ENCODE measurements at regions of chr7 and their contacts with region 1.

Region 1: GRCh38 chr7:518630-519483 is 789 bp downstream of the PDGFA start:
- DNase-seq: peak; percentile 82 to 88
- ATAC-seq: peak; percentile 62 to 71 (median 68)
- H3K4me3 ChIP-seq: peak overlapping the region; percentile 94
- H3K27ac ChIP-seq: peak overlapping the region; percentile 92
- H3K4me1 ChIP-seq: peaks cover 38% of the 10 kb centered on the region
- H3K27me3 ChIP-seq: peaks cover 0 to 8% (median 2%) of the 10 kb centered on the region in 3 donors
- CTCF ChIP-seq: no peak

Region 2: GRCh38 chr7:332646-333392 is 186.0 kb before region 1 on chr7:
- intact Hi-C with region 1: loop called (anchors 2 to 5 kb)
- DNase-seq: peak; percentile 82 to 89
- ATAC-seq: peak; percentile 92 to 99 (median 96)
- H3K4me3 ChIP-seq: peak overlapping the region; percentile 59
- H3K27ac ChIP-seq: no peak overlapping the region
- H3K4me1 ChIP-seq: peaks cover 13% of the 10 kb centered on the region
- H3K27me3 ChIP-seq: peaks cover 0 to 7% (median 3%) of the 10 kb centered on the region in 3 donors
- CTCF ChIP-seq: peak; percentile 91

Region 3: GRCh38 chr7:418647-419280 is 100.1 kb before region 1 on chr7:
- intact Hi-C with region 1: no loop called
- DNase-seq: peak in 1 of 2 donors; percentile 52
- ATAC-seq: no peak
- H3K4me3 ChIP-seq: no peak overlapping the region
- H3K27ac ChIP-seq: no peak overlapping the region
- H3K4me1 ChIP-seq: no peaks in the 10 kb centered on the region
- H3K27me3 ChIP-seq: peaks cover 0 to 12% (median 4%) of the 10 kb centered on the region in 3 donors
- CTCF ChIP-seq: no peak

Region 4: DNA sequence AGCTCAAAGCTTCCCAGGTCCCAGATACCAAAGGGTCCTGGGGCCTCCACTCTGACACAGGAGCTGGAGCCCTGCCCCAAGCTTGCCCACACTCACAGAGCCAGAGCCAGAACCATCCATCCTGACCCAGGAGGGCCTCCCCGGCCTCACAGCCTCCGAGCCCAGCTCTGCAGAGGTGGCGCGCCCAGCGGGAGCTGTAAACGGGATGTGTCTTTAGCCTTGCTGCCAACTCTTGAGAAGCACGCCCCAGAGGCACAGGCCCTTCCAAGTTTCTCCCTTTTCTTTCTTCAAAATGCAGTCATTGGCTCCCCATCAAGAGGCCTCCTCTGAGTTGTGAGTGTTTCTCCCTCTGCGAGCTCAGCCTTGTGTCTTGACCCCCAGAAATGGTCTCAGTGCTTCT is 74.3 kb before region 1 on chr7:
- intact Hi-C with region 1: loop called (anchors 5 kb)
- DNase-seq: no peak
- ATAC-seq: no peak
- H3K4me3 ChIP-seq: no peak overlapping the region
- H3K27ac ChIP-seq: no peak overlapping the region
- H3K4me1 ChIP-seq: peaks cover 10% of the 10 kb centered on the region
- H3K27me3 ChIP-seq: no peaks in the 10 kb centered on the region
- CTCF ChIP-seq: no peak

Region 5: DNA sequence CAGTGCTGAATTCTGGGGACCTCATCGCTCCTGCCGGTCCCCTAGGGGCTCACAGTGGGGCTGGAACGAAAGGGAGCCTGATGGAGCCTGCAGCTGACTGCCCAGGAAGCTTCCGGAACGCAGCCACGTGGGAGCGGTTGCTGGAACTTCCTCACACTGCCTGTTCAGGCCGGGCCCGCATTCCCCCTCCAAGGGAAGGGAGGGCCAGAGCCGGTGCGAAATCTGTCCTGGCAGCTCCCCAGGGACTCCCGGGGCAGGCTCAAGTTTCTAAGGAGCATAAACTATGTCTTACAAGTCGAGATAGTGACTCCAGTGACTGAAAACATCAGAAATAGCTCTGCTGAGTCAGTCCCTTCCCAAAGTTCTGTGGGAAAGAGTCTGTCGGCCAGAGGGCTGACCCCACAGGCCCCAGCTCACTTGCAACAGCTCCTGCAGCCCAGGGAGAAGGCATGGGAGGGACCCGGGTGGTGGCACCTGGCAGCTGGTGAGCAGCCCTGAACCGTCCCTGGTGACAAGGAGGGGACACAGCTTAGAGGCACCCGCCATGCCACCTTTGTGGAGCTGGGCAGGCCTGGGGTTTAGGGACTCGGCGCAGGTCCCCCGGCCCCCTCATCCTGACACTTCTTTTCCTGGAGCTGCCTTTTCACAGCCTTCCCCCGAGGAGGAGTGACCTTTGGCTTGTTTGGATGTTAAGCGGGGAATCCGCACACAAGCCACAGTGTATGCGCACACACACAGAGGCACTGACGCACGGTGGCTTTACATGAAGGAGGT is 46.8 kb before region 1 on chr7:
- intact Hi-C with region 1: loop called in 1 of 2 experiments (anchors 2 kb)
- DNase-seq: peak; percentile 84 to 96
- ATAC-seq: peak; percentile 91 to 99 (median 97)
- H3K4me3 ChIP-seq: peak overlapping the region; percentile 15
- H3K27ac ChIP-seq: peak overlapping the region; percentile 84
- H3K4me1 ChIP-seq: peaks cover 17% of the 10 kb centered on the region
- H3K27me3 ChIP-seq: peaks cover 0 to 7% (median 0%) of the 10 kb centered on the region in 3 donors
- CTCF ChIP-seq: no peak

Region 6: GRCh38 chr7:485188-486081 is 33.4 kb before region 1 on chr7:
- intact Hi-C with region 1: no loop called
- DNase-seq: peak; percentile 9 to 47
- ATAC-seq: peak; percentile 37 to 62 (median 47)
- H3K4me3 ChIP-seq: no peak overlapping the region
- H3K27ac ChIP-seq: no peak overlapping the region
- H3K4me1 ChIP-seq: no peaks in the 10 kb centered on the region
- H3K27me3 ChIP-seq: peaks cover 0 to 2% (median 0%) of the 10 kb centered on the region in 3 donors
- CTCF ChIP-seq: no peak

Region 7: GRCh38 chr7:726084-726853 is 207.4 kb after region 1 on chr7 and contains the start of gene DNAAF5:
- intact Hi-C with region 1: loop called (anchors 5 kb)
- DNase-seq: peak; percentile 91 to 93
- ATAC-seq: peak; percentile 84 to 94 (median 91)
- H3K4me3 ChIP-seq: peak within 1 kb of the TSS; percentile 81
- H3K27ac ChIP-seq: peak within 1 kb of the TSS; percentile 91
- H3K4me1 ChIP-seq: peaks cover 11% of the 10 kb centered on the region
- H3K27me3 ChIP-seq: no peaks in the 10 kb centered on the region
- CTCF ChIP-seq: no peak
- total RNA-seq, gene DNAAF5: 17.8 to 26.7 (median 21.9) TPM

Region 8: DNA sequence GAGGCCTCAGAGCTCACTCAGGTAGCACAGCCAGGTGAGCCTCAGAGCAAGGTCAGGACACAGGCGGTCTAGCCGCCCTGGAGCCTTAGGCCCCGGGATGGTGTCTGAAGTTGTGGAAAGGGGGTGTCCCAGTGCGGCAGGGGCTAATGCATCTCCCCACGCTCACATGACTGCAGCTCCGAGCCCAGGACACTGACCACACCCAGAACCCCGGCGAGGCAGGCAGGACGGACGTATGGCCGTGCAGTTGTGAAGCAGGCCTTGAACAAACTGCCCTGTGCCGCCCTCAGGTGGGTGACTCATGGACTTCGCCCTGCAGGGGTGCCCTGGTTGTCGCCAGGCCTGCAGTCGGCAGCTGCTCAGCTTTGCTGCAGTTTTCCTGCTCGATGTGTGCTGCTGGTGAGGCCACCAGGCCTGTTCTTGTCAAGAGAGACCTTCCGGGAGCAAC is 213.3 kb after region 1 on chr7:
- intact Hi-C with region 1: loop called (anchors 5 kb)
- DNase-seq: peak; percentile 52 to 61
- ATAC-seq: peak; percentile 73 to 85 (median 79)
- H3K4me3 ChIP-seq: no peak overlapping the region
- H3K27ac ChIP-seq: peak overlapping the region; percentile 87
- H3K4me1 ChIP-seq: peaks cover 32% of the 10 kb centered on the region
- H3K27me3 ChIP-seq: no peaks in the 10 kb centered on the region
- CTCF ChIP-seq: peak; percentile 40

Measured in psoas muscle (tissue), 8 donors.